Activated CD4-positive, alpha-beta T cell treated with anti-CD3 and anti-CD28 coated beads for 36 hours (primary cell): ENCODE measurements at regions of chr1 and their contacts with region 1.

Region 1: DNA sequence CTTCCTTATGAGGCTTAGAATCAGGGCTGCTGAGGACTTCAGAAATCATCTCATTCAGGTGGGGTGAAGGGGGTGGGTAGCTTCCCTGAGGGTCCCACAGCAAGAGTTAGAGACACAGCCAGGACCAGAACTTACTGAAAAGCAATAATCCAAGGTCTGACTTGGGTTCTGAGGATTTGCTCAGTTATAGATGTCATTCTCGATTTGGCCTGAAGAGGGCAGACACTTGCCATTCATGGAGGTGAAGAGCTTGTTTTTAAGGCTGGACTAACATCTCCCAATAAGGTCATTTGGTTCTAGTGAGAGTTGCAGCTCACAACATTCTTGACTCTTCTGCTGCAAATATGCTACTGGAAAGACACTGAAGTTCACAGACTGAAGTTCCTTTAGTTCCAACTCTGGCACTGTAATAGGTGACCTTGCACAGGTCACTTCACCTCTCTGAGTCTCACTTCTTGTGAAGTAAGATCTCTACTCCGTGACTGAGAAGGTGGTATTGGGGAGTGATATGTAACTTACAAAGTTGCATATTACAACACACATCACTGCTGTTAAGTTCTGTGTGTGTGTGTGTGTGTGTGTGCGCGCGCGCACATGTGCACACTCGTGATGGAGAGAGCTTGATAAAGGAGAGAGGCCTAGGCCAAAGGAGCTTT is 69.8 kb upstream of the DIRAS3 start:
- DNase-seq: peak; percentile 45
- ATAC-seq: peak; percentile 30
- H3K4me3 Mint-ChIP-seq: no peak overlapping the region
- H3K27ac Mint-ChIP-seq: no peak overlapping the region
- H3K4me1 Mint-ChIP-seq: peaks cover 4% of the 10 kb centered on the region
- H3K27me3 Mint-ChIP-seq: peaks cover 1% of the 10 kb centered on the region

Region 2: GRCh38 chr1:68346188-68346808 is 226.0 kb after region 1 on chr1:
- CTCF ChIA-PET with region 1: interaction called, 10 read pairs
- POLR2A ChIA-PET with region 1: no interaction called
- intact Hi-C with region 1: loop called (anchors 1 to 2 kb)
- DNase-seq: no peak
- ATAC-seq: no peak
- H3K4me3 Mint-ChIP-seq: no peak overlapping the region
- H3K27ac Mint-ChIP-seq: no peak overlapping the region
- H3K4me1 Mint-ChIP-seq: no peaks in the 10 kb centered on the region
- H3K27me3 Mint-ChIP-seq: peaks cover 2% of the 10 kb centered on the region

Region 3: DNA sequence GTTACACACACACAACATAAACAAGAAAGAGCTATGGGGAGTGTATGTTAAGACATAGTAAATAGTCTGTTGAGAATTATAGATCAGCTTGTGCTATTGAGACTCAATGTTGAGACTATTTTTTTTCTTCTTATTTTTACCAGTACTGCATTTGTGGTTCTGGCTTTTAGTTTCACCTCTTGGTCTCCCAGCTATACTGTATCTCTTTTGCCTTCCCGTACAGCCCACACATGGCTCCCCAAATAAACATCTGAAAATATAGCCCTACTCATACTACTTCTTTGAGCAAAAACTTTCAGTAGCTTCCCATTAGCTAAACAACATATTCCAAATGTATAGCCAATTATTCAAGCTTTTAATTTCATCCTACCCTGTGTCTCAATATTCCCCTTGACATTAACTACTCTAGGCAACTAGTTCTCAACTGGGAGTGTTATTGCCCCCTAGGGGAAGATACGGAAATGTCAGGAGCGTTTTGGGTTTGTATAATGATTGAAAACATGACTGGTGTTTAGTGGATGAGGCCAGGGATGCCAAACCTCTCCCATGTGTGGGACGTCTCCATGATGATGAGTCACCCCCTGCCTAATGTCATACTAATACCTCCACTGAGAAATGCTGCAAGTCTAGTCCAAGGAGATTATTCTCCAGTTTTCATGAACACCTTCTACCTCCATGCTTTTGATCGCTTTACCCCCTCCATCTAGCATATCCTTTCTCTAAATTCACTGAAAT is 322.7 kb after region 1 on chr1:
- CTCF ChIA-PET with region 1: interaction called, 11 read pairs
- POLR2A ChIA-PET with region 1: no interaction called
- intact Hi-C with region 1: loop called (anchors 2 kb)
- DNase-seq: peak; percentile 37
- ATAC-seq: no peak
- H3K4me3 Mint-ChIP-seq: no peak overlapping the region
- H3K27ac Mint-ChIP-seq: no peak overlapping the region
- H3K4me1 Mint-ChIP-seq: no peaks in the 10 kb centered on the region
- H3K27me3 Mint-ChIP-seq: peaks cover 11% of the 10 kb centered on the region

Region 4: GRCh38 chr1:68590473-68590872 is 470.2 kb after region 1 on chr1:
- CTCF ChIA-PET with region 1: no interaction called
- POLR2A ChIA-PET with region 1: no interaction called
- intact Hi-C with region 1: loop called in 1 of 2 experiments (anchors 10 kb)
- DNase-seq: no peak
- ATAC-seq: no peak
- H3K4me3 Mint-ChIP-seq: no peak overlapping the region
- H3K27ac Mint-ChIP-seq: no peak overlapping the region
- H3K4me1 Mint-ChIP-seq: no peaks in the 10 kb centered on the region
- H3K27me3 Mint-ChIP-seq: no peaks in the 10 kb centered on the region

Region 5: DNA sequence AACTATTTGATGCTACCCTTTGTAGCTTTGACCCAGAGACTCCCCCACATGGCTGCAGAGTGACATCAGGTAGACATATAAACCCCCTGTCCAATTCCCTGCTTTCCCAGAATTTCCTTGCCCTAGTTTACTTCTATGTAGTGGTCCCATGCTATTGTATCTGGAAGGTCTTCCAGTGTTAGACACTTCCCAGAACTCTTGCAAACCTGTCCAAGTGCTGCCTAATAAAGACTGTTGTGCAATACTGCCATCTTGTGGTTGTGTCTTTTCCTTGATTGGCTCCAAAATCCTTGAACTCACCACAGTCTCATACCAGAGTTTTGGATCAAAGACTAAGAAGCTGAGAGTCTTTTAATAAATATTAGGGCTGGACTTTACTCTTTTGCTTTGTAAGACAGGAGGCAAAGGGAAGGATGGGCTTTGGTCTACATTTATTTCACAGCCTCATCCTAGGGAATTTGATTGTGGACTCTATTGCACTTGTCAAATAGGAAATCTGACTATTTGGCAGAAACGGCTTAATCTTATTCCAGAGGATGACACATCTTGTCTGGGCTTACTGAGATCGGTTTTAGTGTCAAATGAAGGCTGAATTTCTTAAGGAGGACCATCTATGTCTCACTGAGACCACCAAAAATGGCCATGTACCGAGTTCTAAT is 1617.4 kb after region 1 on chr1:
- CTCF ChIA-PET with region 1: interaction called, 25 read pairs
- POLR2A ChIA-PET with region 1: no interaction called
- intact Hi-C with region 1: loop called (anchors 1 kb)
- DNase-seq: peak; percentile 9
- ATAC-seq: no peak
- H3K4me3 Mint-ChIP-seq: no peak overlapping the region
- H3K27ac Mint-ChIP-seq: no peak overlapping the region
- H3K4me1 Mint-ChIP-seq: no peaks in the 10 kb centered on the region
- H3K27me3 Mint-ChIP-seq: no peaks in the 10 kb centered on the region